Posterior vena cava (tissue), 2 donors: ENCODE measurements at regions of chr2 and their contacts with region 1.

Region 1: DNA sequence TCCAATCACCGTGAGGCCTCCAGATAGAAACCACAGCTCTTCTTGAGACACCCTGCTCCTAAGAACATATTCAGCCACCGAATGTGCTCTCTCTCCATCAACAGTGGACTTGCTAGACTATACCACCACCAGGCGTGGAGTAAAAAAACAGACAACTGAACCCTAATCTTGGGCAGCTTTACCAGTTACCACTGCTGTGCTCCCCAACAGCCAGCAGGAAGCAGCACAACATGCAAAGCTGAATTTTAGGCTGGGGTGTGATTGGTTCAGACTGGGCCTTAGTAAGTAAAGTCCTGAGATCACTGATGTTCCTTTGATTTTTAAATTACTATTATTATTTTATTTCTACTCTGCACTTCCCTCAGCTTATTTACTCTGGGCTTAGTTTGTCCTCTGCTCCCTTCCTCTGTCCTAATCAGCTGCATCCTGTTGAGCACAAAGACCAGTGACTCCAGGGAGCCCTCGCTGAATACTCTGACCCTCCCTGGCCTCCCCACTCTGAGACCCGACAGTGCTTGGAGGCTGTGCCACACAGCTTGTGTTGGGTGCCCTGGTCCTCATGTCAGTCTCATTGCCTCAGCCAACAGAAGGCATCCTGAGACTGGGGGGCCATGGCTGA is 21.9 kb downstream of the MRPL35 start:
- DNase-seq: no peak

Region 2: DNA sequence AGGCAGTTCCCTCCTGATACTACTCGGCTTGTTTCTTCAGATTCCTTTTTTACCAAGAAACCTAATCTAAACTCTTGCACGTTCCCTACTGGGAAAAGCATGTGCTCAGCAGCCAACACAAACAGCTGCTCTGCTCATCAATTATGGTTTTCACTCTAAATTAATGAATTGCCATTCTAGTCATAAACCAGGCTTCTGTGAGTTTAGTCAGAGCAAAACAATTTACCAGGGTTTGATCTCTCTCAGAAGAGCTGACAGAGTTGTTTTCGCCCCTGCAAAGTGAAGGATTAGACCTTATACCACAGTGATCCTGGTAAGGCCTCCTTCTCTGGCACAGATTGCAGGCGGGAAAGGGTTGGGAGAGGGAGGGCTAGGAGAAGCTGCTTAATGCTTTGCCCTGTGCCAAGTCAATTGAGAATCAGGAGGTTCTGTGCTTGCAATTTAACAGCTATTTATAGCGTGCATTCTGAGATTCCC is 59.1 kb after region 1 on chr2:
- intact Hi-C with region 1: loop called in 1 of 2 experiments (anchors 10 kb)
- DNase-seq: no peak

Region 3: GRCh38 chr2:86368161-86368824 is 147.1 kb after region 1 on chr2:
- intact Hi-C with region 1: loop called (anchors 2 to 5 kb)
- DNase-seq: no peak